ENCODE measurements at regions of chr18 and their contacts with region 1.

Region 1: GRCh38 chr18:47100214-47100831 is 50.0 kb downstream of the HDHD2 start:
- DNase-seq: peak in 1 of 2 donors; percentile 49
- ATAC-seq: peak; percentile 70

Region 2: DNA sequence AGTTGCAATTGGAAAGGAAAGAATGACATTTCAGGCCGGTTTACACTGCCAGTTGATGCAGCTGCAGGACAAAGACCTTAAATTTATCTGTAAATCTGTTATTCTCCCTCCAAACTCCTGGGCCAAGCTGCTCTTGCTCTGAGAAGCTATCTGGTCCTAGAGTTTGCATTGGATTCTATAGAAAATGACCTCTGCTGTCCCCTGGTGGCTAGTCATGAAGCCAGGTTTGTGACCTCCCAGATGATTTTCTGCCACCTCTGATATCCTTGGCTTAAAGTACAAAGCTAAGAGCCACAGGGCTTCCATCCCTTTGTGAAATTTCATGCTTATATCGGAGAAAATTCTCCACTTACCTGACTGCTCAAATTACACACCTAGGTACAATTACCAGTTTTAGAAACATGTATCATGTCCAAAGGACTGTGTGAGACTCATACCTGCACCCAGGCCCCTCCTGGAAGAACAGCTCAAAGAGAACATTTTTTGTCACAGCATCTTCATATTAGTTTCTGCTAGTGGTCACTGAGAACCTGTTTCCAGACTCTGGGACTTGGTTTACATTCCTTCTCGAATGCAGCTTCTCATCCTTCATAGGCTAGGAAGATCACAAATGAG is 104.7 kb after region 1 on chr18:
- intact Hi-C with region 1: loop called (anchors 5 kb)
- DNase-seq: peak in 1 of 2 donors; percentile 48
- ATAC-seq: peak; percentile 74

Region 3: GRCh38 chr18:47215554-47216138 is 115.3 kb after region 1 on chr18:
- intact Hi-C with region 1: loop called in 1 of 2 experiments (anchors 5 kb)
- DNase-seq: no peak
- ATAC-seq: peak; percentile 57

Region 4: GRCh38 chr18:47748847-47749599 is 648.7 kb after region 1 on chr18:
- intact Hi-C with region 1: loop called in 1 of 2 experiments (anchors 10 kb)
- DNase-seq: peak; percentile 30 to 83
- ATAC-seq: peak; percentile 95

Measured in left colon (tissue), 2 donors.